CD4-positive, alpha-beta memory T cell (primary cell): ENCODE measurements at regions of chr22 and their contacts with region 1.

Region 1: GRCh38 chr22:45172881-45173585 is 9.3 kb downstream of the NUP50 start:
- DNase-seq: peak; percentile 71 to 81 (median 74)
- H3K4me3 ChIP-seq: peak overlapping the region in 1 of 2 donors; percentile 43
- H3K4me3 Mint-ChIP-seq: peak overlapping the region; percentile 68 to 85 (median 78)
- H3K27ac ChIP-seq: peak overlapping the region; percentile 52
- H3K27ac Mint-ChIP-seq: peak overlapping the region; percentile 80 to 99 (median 94)
- H3K4me1 ChIP-seq: peaks cover 90% of the 10 kb centered on the region
- H3K4me1 Mint-ChIP-seq: peaks cover 68 to 89% (median 80%) of the 10 kb centered on the region in 4 donors
- H3K27me3 ChIP-seq: no peaks in the 10 kb centered on the region
- H3K27me3 Mint-ChIP-seq: no peaks in the 10 kb centered on the region

Region 2: DNA sequence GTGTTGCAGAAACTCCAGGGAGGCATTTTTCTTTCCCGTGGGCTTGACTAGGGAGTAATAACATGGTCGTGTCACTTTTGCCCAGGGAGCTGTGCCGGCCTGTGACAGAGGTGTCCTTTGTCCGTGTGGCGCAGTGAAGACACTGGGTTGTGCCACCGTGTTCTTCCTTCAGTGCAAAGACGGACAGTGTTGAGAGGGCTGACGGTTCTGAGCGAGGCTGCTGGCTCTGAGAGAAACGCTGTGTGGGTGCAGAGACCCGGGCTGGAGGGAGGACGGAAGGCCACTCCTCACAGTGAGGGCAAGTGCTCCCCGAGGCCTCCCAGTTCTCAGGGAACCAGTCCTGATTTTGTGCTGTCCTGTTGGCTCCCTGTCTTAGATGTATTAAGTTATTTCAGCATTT is 10.9 kb after region 1 on chr22:
- CTCF ChIA-PET with region 1: no interaction called
- POLR2A ChIA-PET with region 1: interaction called, 10 read pairs
- intact Hi-C with region 1: no loop called
- DNase-seq: no peak
- H3K4me3 ChIP-seq: no peak overlapping the region
- H3K4me3 Mint-ChIP-seq: no peak overlapping the region
- H3K27ac ChIP-seq: no peak overlapping the region
- H3K27ac Mint-ChIP-seq: peak overlapping the region in 3 of 7 donors; percentile 6 to 62 (median 53)
- H3K4me1 ChIP-seq: peaks cover 29% of the 10 kb centered on the region
- H3K4me1 Mint-ChIP-seq: peaks cover 17 to 35% (median 27%) of the 10 kb centered on the region in 4 donors
- H3K27me3 ChIP-seq: no peaks in the 10 kb centered on the region
- H3K27me3 Mint-ChIP-seq: no peaks in the 10 kb centered on the region

Region 3: GRCh38 chr22:45208993-45209801 is 36.2 kb after region 1 on chr22:
- CTCF ChIA-PET with region 1: interaction called, 3 read pairs
- POLR2A ChIA-PET with region 1: no interaction called
- intact Hi-C with region 1: loop called (anchors 1 kb)
- DNase-seq: peak in 4 of 5 donors; percentile 6 to 23 (median 12)
- H3K4me3 ChIP-seq: no peak overlapping the region
- H3K4me3 Mint-ChIP-seq: no peak overlapping the region
- H3K27ac ChIP-seq: no peak overlapping the region
- H3K27ac Mint-ChIP-seq: peak overlapping the region in 2 of 7 donors; percentile 52
- H3K4me1 ChIP-seq: no peaks in the 10 kb centered on the region
- H3K4me1 Mint-ChIP-seq: peaks cover 0 to 6% (median 3%) of the 10 kb centered on the region in 4 donors
- H3K27me3 ChIP-seq: no peaks in the 10 kb centered on the region
- H3K27me3 Mint-ChIP-seq: no peaks in the 10 kb centered on the region